ENCODE measurements at regions of chr15 and their contacts with region 1.

Region 1: GRCh38 chr15:97909291-97909891 is 51.1 kb upstream of the ARRDC4 start:
- DNase-seq: no peak
- H3K4me3 ChIP-seq: no peak overlapping the region
- H3K27ac ChIP-seq: no peak overlapping the region
- H3K4me1 ChIP-seq: peaks cover 0 to 5% (median 4%) of the 10 kb centered on the region in 4 donors
- H3K27me3 ChIP-seq: no peaks in the 10 kb centered on the region
- CTCF ChIP-seq: peak; percentile 88 to 98 (median 91)
- EP300 ChIP-seq: no peak
- POLR2A ChIP-seq: no peak

Region 2: DNA sequence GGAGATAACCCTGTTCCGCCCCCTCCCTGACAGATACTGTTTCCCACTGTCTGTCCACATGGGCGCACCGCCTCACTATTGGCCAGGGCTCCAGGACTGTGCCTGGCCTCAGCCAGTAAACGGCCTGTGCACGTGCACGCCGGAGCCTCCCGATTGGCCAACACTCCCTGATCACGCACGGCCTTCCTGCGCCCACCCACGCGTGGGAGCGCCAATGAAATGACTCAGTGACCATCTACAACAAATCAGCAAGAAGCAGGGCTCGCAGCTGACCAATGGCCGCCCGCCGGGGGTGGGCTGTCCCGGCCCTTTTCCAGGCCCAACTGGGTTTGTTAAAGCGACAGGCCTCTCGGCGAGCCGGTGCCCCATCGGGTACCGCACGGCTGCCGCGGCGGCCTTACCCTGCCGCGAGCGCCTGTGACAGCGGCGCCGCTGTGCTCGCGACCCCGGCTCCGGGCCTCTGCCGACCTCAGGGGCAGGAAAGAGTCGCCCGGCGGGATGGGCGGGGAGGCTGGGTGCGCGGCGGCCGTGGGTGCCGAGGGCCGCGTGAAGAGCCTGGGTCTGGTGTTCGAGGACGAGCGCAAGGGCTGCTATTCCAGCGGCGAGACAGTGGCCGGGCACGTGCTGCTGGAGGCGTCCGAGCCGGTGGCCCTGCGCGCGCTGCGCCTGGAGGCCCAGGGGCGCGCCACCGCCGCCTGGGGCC is 51.1 kb after region 1 on chr15 and contains the start of gene ARRDC4:
- intact Hi-C with region 1: no loop called
- DNase-seq: peak; percentile 100
- H3K4me3 ChIP-seq: peak within 1 kb of the TSS; percentile 93 to 100 (median 98)
- H3K27ac ChIP-seq: peak within 1 kb of the TSS; percentile 93 to 99 (median 98)
- H3K4me1 ChIP-seq: peaks cover 27 to 51% (median 43%) of the 10 kb centered on the region in 4 donors
- H3K27me3 ChIP-seq: no peaks in the 10 kb centered on the region
- CTCF ChIP-seq: peak in 1 of 3 experiments; percentile 22
- EP300 ChIP-seq: no peak
- POLR2A ChIP-seq: peak; percentile 65
- total RNA-seq, gene ARRDC4: 115 to 135 (median 128) TPM

Region 3: GRCh38 chr15:98292442-98293240 is 383.2 kb after region 1 on chr15:
- intact Hi-C with region 1: loop called (anchors 10 kb)
- DNase-seq: no peak
- H3K4me3 ChIP-seq: peak overlapping the region in 3 of 4 donors; percentile 19 to 27 (median 25)
- H3K27ac ChIP-seq: no peak overlapping the region
- H3K4me1 ChIP-seq: peaks cover 4 to 10% (median 10%) of the 10 kb centered on the region in 4 donors
- H3K27me3 ChIP-seq: peaks cover 0 to 48% (median 6%) of the 10 kb centered on the region in 4 donors
- CTCF ChIP-seq: peak; percentile 52 to 63 (median 57)
- EP300 ChIP-seq: no peak
- POLR2A ChIP-seq: no peak

Region 4: DNA sequence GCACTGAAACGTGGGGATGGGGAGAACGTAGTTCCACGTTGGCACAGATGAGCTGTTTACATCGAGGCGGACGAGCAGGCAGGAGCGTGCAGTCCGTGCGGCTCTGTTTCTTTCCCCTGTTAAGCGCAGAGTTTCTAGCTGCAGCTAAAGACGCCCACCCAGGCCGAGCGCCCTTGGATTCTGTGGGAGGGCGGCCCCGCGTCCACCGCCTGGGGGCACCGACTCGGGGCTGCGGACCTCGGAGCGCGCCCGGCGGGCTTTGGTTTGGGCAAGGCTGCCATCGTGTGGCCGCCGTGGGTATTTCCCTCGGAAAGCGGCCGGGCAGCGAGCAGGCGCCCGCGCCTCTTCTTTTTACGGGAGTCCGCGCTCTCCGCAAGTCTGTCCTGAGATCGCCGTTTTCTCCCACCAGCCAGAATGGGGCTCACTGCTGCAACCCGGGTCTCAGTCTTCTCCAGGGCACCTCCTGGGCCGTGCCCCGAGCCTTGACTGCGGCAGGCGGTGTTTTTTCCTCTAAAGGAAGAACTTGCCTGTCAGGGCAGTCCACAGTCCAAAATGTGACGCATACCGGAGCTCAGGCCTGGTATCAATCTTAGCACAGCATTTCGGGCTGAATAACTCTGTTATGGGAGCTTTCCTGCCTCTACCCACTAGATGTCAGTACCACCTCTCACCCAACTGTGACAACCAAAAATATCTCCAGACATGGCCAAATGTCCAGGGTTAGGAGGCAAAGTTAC is 519.0 kb after region 1 on chr15:
- intact Hi-C with region 1: loop called (anchors 10 kb)
- DNase-seq: no peak
- H3K4me3 ChIP-seq: peak overlapping the region; percentile 46 to 59 (median 48)
- H3K27ac ChIP-seq: peak overlapping the region; percentile 69 to 78 (median 74)
- H3K4me1 ChIP-seq: peaks cover 0 to 22% (median 18%) of the 10 kb centered on the region in 4 donors
- H3K27me3 ChIP-seq: peaks cover 0 to 9% (median 0%) of the 10 kb centered on the region in 4 donors
- CTCF ChIP-seq: peak; percentile 87 to 94 (median 93)
- EP300 ChIP-seq: no peak
- POLR2A ChIP-seq: no peak

Region 5: GRCh38 chr15:98635848-98636247 is 726.5 kb after region 1 on chr15:
- intact Hi-C with region 1: no loop called
- DNase-seq: peak; percentile 77
- H3K4me3 ChIP-seq: no peak overlapping the region
- H3K27ac ChIP-seq: no peak overlapping the region
- H3K4me1 ChIP-seq: no peaks in the 10 kb centered on the region
- H3K27me3 ChIP-seq: peaks cover 0 to 24% (median 0%) of the 10 kb centered on the region in 4 donors
- CTCF ChIP-seq: no peak
- EP300 ChIP-seq: no peak
- POLR2A ChIP-seq: no peak

Measured in esophagus muscularis mucosa (tissue), 4 donors.